ENCODE measurements at regions of chr1 and their contacts with region 1.

Region 1: GRCh38 chr1:159798893-159799292 is 3.3 kb upstream of the FCRL6 start:
- DNase-seq: no peak
- ATAC-seq: no peak
- H3K4me3 Mint-ChIP-seq: no peak overlapping the region
- H3K27ac Mint-ChIP-seq: no peak overlapping the region
- H3K4me1 Mint-ChIP-seq: peaks cover 8% of the 10 kb centered on the region
- H3K27me3 Mint-ChIP-seq: peaks cover 28% of the 10 kb centered on the region
- CTCF ChIP-seq: no peak

Region 2: GRCh38 chr1:159780583-159781582 is 18.0 kb before region 1 on chr1 and contains the start of gene DUSP23:
- CTCF ChIA-PET with region 1: interaction called, 9 read pairs
- POLR2A ChIA-PET with region 1: no interaction called
- intact Hi-C with region 1: loop called (anchors 2 kb)
- DNase-seq: peak; percentile 93
- ATAC-seq: peak; percentile 98
- H3K4me3 Mint-ChIP-seq: peak within 1 kb of the TSS; percentile 83
- H3K27ac Mint-ChIP-seq: peak within 1 kb of the TSS; percentile 68
- H3K4me1 Mint-ChIP-seq: peaks cover 12% of the 10 kb centered on the region
- H3K27me3 Mint-ChIP-seq: peaks cover 3% of the 10 kb centered on the region
- CTCF ChIP-seq: no peak
- total RNA-seq, gene DUSP23: 15.5 and 15.7 TPM in 2 replicates

Region 3: GRCh38 chr1:159821171-159821867 is 22.4 kb after region 1 on chr1:
- CTCF ChIA-PET with region 1: interaction called, 7 read pairs
- POLR2A ChIA-PET with region 1: no interaction called
- intact Hi-C with region 1: loop called (anchors 1 kb)
- DNase-seq: no peak
- ATAC-seq: peak; percentile 50
- H3K4me3 Mint-ChIP-seq: no peak overlapping the region
- H3K27ac Mint-ChIP-seq: no peak overlapping the region
- H3K4me1 Mint-ChIP-seq: peaks cover 5% of the 10 kb centered on the region
- H3K27me3 Mint-ChIP-seq: peaks cover 27% of the 10 kb centered on the region
- CTCF ChIP-seq: no peak

Region 4: GRCh38 chr1:159936273-159936904 is 137.5 kb after region 1 on chr1:
- CTCF ChIA-PET with region 1: interaction called, 4 read pairs
- POLR2A ChIA-PET with region 1: no interaction called
- intact Hi-C with region 1: loop called (anchors 2 kb)
- DNase-seq: peak; percentile 86
- ATAC-seq: peak; percentile 89
- H3K4me3 Mint-ChIP-seq: peak overlapping the region; percentile 25
- H3K27ac Mint-ChIP-seq: no peak overlapping the region
- H3K4me1 Mint-ChIP-seq: peaks cover 47% of the 10 kb centered on the region
- H3K27me3 Mint-ChIP-seq: peaks cover 4% of the 10 kb centered on the region
- CTCF ChIP-seq: peak; percentile 91

Measured in activated B cell treated with CpG ODN at 0.5 μM for 24 hours (primary cell).